HEK293 (cell line): ENCODE measurements at regions of chr1 and their contacts with region 1.

Region 1: DNA sequence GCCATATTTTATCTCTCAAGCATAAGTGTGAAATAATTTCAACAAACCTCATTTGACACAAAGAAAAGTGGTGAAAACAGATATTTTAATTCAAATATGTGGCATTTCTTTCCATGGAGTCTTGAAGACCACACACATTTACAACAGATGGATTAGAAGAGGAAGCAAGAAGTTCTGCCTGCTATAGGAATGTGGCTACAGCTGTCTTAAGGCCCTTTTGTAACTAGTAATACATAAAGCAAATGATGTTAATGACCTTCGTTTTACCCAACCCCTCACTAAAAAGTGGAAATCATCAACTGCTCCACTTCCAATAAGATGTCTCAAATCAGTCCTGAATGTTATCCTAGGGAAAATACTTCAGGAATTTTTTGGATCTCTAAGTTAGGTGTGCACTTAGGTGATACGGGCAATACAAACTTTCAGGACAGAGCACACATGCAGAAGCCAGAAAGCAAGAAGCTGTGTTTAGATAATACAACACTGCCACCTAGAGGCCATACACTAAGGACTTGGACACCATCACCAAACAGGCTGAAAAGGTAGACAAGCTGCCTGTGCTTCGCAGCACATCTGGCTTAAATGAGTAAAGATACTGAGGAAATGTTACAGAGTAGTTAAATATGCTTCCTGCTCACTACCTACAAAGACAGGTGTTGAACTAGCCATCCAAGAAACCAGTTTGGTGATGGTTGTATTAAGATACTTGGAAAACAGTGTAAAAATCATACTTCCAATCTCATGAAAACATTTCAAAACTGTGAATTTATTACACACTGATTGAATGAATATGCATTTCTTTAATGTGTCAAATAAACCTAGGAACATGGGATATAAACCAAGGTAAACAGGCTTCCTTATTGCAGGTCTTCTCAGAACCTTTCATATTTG is 24.4 kb downstream of the RRAGC start:
- H3K4me3 ChIP-seq: no peak overlapping the region
- H3K27ac ChIP-seq: no peak overlapping the region
- H3K4me1 ChIP-seq: no peaks in the 10 kb centered on the region
- CTCF ChIP-seq: peak; percentile 73

Region 2: GRCh38 chr1:38026592-38027200 is 808.5 kb before region 1 on chr1:
- CTCF ChIA-PET with region 1: interaction called, 14 read pairs
- POLR2A ChIA-PET with region 1: interaction called, 3 read pairs
- H3K4me3 ChIP-seq: no peak overlapping the region
- H3K27ac ChIP-seq: no peak overlapping the region
- H3K4me1 ChIP-seq: peaks cover 19% of the 10 kb centered on the region
- CTCF ChIP-seq: peak; percentile 79

Region 3: GRCh38 chr1:38680801-38681510 is 154.2 kb before region 1 on chr1:
- CTCF ChIA-PET with region 1: no interaction called
- POLR2A ChIA-PET with region 1: no interaction called
- H3K4me3 ChIP-seq: no peak overlapping the region
- H3K27ac ChIP-seq: no peak overlapping the region
- H3K4me1 ChIP-seq: no peaks in the 10 kb centered on the region
- CTCF ChIP-seq: no peak

Region 4: DNA sequence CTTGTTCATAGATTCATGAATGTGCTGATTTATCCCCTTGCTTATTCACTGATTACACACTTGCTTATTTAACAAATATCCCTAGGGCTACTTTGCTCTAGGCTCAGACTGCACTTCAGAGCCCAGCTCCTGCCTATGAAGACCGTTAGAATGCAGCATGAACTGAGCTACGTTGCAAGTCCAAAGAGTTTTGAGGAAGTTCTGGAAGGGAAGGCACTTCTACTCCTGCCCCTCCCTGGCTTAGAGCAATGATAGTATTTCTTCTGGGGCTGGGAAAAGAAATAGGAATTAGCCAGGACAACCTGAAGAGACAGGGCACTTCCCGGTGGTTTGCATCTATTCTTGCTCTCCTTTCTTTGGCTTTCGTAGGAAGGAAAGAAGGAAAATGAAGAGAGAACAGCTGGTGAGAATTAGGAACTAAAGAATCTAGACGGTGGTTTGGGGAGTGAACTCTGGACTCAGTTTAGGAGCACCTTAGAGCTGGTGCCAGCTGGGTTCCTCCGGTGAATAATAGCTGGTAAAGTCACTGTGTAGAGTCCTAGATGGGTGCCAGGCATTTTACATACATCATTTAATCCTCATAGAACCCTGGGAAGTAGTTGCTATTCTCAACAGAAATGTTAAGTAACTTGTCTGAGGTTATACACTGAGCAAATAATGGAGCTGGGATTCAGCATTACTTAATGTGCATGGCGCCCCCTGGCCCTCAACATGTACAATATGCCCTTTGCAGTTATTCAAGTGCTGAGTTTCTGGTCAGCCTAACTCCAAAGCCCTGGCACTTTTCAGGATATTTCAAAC is 256.9 kb after region 1 on chr1:
- CTCF ChIA-PET with region 1: interaction called, 11 read pairs
- POLR2A ChIA-PET with region 1: interaction called, 3 read pairs
- H3K4me3 ChIP-seq: no peak overlapping the region
- H3K27ac ChIP-seq: no peak overlapping the region
- H3K4me1 ChIP-seq: no peaks in the 10 kb centered on the region
- CTCF ChIP-seq: peak; percentile 37; the same call in 1 of the 2 replicates